Panc1 (cell line): ENCODE measurements at regions of chr12 and their contacts with region 1.

Region 1: DNA sequence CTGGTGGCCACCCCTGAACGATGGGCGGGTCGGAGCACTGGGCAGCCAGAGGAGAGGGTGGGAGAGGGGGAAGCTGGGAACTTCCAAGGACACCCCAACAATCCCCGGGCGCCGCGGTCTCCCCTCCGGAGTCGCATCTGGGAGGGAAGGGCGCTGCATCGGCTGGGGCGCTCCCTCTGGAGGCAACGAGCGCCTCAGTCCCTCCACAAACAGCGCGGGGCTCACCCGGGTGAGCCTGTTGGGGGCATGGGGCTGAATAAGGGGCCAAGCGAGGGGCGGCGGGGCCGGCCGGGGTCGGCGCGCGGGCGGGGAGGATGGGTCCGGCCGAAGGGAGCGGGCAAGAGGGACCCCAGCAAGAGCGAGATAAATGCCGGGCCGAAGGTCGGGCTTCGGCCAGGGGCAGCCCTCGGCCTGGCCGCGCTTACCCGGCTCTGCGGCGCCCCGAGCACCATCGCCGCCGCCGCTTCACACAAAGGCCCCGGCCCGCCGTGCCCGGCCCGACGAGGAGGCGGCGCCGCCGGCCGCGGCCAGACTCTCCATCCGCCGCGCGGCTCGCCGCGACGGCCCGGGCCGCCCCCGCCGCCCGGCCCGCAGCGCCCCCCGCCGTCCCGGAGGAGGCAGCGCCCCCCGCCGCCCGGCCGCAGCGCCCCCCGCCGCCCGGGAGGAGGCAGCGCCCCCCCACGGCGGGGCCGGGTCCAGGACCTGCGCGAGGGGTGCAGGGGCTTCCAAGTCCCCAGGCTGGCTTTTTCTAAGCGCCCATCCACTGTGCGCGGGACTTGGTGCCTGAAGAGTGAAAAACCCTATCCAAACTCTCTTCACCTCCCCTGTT is at the start of gene ZBTB39:
- DNase-seq: no peak
- ATAC-seq: peak; percentile 91
- H3K4me3 ChIP-seq: peak within 1 kb of the TSS; percentile 73 to 74
- H3K27ac ChIP-seq: peak within 1 kb of the TSS; percentile 57
- H3K4me1 ChIP-seq: peaks cover 14% of the 10 kb centered on the region
- H3K27me3 ChIP-seq: no peaks in the 10 kb centered on the region
- CTCF ChIP-seq: peak; percentile 98
- total RNA-seq, gene ZBTB39: 5.8 TPM

Region 2: DNA sequence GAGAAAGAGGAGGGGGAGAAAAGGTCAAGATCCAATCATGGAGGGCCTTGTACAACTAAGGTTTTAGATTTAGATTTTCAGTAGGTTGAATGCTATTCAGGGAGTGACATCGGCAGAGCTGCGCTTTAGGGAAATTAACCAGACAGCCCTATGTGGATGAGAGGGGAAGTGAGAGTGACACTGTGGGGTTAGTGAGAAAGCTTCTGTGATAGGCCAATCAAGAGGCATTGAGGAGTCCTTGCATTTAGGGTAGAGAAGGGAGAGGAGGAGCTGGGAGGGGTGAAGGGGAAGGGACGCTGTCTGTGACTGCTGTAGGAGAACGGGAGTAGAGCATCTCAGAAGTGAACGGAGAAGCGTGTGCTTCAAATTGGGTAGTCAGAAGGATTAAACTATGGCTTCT is 239.7 kb before region 1 on chr12:
- CTCF ChIA-PET with region 1: no interaction called
- POLR2A ChIA-PET with region 1: no interaction called
- in situ Hi-C with region 1: no loop called
- intact Hi-C with region 1: loop called (anchors 5 kb)
- DNase-seq: no peak
- ATAC-seq: no peak
- H3K4me3 ChIP-seq: no peak overlapping the region
- H3K27ac ChIP-seq: no peak overlapping the region
- H3K4me1 ChIP-seq: no peaks in the 10 kb centered on the region
- H3K27me3 ChIP-seq: no peaks in the 10 kb centered on the region
- CTCF ChIP-seq: no peak

Region 3: GRCh38 chr12:57063991-57064685 is 57.9 kb after region 1 on chr12:
- CTCF ChIA-PET with region 1: interaction called, 6 read pairs
- POLR2A ChIA-PET with region 1: no interaction called
- in situ Hi-C with region 1: no loop called
- intact Hi-C with region 1: loop called (anchors 2 kb)
- DNase-seq: no peak
- ATAC-seq: no peak
- H3K4me3 ChIP-seq: no peak overlapping the region
- H3K27ac ChIP-seq: no peak overlapping the region
- H3K4me1 ChIP-seq: no peaks in the 10 kb centered on the region
- H3K27me3 ChIP-seq: no peaks in the 10 kb centered on the region
- CTCF ChIP-seq: no peak

Region 4: DNA sequence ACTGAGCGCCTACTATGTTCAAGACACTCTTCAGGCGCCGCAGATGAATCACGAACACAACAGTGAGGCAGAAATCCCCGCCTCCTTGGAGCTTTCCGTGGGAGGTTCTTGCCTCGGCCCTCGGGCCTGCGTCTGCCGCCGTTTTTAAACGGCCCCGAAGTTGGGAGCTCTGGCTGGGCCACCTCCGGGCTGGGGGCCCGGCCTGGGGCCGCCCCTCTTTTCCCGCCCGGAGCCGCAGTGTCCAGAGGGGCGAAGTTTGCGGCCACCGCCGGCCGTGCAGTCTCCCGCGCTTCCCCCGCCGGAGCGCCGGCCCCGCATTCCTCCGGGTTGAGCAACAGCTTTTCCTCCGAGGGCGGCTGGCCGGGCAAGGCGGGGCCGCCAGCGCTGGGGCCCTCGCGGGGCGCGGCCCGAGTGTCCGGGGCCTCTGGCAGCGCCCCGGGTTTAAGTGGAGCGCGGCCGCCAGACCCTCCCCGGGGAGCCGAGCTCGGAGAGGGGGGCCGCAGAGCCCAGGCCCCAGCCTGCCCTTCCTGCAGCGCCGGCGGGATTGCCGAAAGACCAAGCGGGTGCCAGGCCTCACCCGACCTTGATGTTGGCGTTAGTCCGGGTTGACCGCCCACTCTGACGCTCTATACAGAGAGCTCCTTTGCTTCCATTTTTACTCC is 859.0 kb after region 1 on chr12:
- CTCF ChIA-PET with region 1: no interaction called
- POLR2A ChIA-PET with region 1: no interaction called
- in situ Hi-C with region 1: no loop called
- intact Hi-C with region 1: no loop called
- DNase-seq: no peak
- ATAC-seq: peak; percentile 91
- H3K4me3 ChIP-seq: peak overlapping the region; percentile 44 to 66
- H3K27ac ChIP-seq: peak overlapping the region; percentile 94
- H3K4me1 ChIP-seq: peaks cover 23% of the 10 kb centered on the region
- H3K27me3 ChIP-seq: no peaks in the 10 kb centered on the region
- CTCF ChIP-seq: no peak